ENCODE measurements at regions of chr20 and their contacts with region 1.

Region 1: DNA sequence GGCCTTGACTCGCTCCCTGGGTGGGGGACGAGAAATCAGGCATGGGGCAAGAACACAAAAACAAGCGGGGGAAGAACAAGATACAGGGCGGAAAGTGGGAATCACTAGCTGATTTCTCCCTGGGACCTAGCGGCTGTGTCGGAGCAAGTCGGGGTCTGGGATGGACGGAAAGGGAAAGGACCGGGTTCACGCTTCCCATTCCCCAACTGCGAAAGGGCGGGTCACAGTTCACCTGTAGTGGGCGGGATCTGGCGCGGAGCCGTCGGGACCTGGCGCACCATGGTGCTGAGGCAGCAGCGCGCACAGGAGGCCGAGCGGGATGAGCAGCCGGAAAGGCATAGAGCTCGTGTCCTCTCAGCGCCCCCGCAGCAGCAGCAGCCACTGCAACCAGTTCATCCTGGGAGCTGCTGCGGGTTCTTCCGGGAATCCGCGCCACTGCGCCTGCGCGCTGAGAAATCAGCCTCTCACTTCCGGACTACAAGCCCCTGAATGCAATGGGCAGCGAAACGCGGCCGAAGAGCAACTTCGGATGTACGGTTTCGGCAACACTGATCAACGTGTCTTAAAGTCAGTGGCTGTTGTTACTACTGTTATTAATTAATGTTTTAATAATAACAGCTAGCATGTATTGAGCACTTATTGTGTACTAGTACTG is at the start of gene EDEM2:
- DNase-seq: peak; percentile 95
- H3K4me3 ChIP-seq: peak within 1 kb of the TSS; percentile 64 to 90 (median 87)
- H3K27ac ChIP-seq: peak within 1 kb of the TSS; percentile 81
- H3K4me1 ChIP-seq: peaks cover 11% of the 10 kb centered on the region
- H3K27me3 ChIP-seq: no peaks in the 10 kb centered on the region
- CTCF ChIP-seq: no peak
- total RNA-seq, gene EDEM2: 22.3 to 33.2 TPM

Region 2: DNA sequence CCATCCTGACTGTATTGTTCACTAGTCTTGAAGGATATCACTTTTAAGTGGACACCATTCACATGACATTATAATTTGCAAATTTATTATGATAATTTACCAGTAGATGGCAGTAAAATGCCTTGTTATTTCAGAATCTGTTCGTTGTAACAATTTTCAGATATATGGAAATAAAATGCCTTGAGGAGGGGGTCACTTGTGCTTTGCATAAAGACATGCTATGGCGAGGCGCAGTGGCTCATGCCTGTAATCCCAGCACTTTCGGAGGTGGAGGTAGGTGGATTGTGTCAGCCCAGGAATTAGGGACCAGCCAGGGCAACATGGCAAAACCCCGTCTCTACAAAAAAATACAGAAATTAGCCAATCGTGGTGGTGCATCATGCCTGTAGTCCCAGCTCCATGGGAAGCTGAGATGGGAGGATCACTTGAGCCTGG is 312.6 kb before region 1 on chr20:
- CTCF ChIA-PET with region 1: no interaction called
- dilution Hi-C with region 1: no loop called
- in situ Hi-C with region 1: no loop called
- intact Hi-C with region 1: loop called (anchors 2 kb)
- DNase-seq: peak; percentile 16
- H3K4me3 ChIP-seq: peak overlapping the region in 1 of 3 experiments; percentile 28
- H3K27ac ChIP-seq: no peak overlapping the region
- H3K4me1 ChIP-seq: no peaks in the 10 kb centered on the region
- H3K27me3 ChIP-seq: peaks cover 4% of the 10 kb centered on the region
- CTCF ChIP-seq: peak; percentile 20 to 39

Region 3: DNA sequence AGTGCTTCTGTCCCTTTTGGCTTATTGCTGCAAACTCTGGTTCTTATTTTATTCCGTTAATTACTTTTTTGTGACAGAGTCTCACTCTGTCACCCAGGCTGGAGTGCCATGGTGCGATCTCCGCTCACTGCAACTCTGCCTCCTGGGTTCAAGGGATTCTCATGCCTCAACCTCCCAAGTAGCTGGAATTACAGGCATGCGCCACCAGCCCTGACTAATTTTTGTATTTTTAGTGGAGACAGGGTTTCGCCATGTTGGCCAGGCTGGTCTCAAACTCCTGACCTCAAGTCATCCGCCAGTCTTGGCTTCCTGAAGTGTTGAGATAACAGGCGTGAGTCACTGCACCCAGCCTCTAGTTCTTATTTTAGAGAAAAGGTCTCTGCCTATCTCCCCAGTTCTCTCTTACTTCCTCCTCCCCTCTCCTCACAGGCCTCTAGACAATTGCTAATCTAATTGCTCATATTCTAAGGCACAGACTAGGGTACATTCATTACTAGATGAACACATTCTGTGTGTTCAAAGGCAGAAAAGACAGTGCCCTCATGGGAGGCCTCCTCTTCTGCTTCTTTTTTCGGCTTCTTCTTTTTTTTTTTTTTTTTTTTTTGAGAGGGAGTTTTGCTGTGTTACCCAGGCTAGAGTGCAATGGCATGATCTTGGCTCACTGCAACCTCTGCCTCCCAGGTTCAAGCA is 26.9 kb before region 1 on chr20:
- CTCF ChIA-PET with region 1: no interaction called
- dilution Hi-C with region 1: no loop called
- in situ Hi-C with region 1: no loop called
- intact Hi-C with region 1: no loop called
- DNase-seq: no peak
- H3K4me3 ChIP-seq: no peak overlapping the region
- H3K27ac ChIP-seq: no peak overlapping the region
- H3K4me1 ChIP-seq: no peaks in the 10 kb centered on the region
- H3K27me3 ChIP-seq: no peaks in the 10 kb centered on the region
- CTCF ChIP-seq: no peak

Region 4: GRCh38 chr20:35171753-35172433 is 24.8 kb after region 1 on chr20 and contains the start of gene PROCR:
- CTCF ChIA-PET with region 1: interaction called, 4 read pairs
- dilution Hi-C with region 1: no loop called
- in situ Hi-C with region 1: no loop called
- intact Hi-C with region 1: loop called (anchors 1 kb)
- DNase-seq: peak; percentile 99
- H3K4me3 ChIP-seq: peak within 1 kb of the TSS; percentile 65 to 72 (median 65)
- H3K27ac ChIP-seq: peak within 1 kb of the TSS; percentile 50
- H3K4me1 ChIP-seq: peaks cover 17% of the 10 kb centered on the region
- H3K27me3 ChIP-seq: no peaks in the 10 kb centered on the region
- CTCF ChIP-seq: no peak
- total RNA-seq, gene PROCR: 19.2 to 44.8 TPM

Region 5: GRCh38 chr20:35207950-35208611 is 61.0 kb after region 1 on chr20:
- CTCF ChIA-PET with region 1: interaction called, 7 read pairs
- dilution Hi-C with region 1: no loop called
- in situ Hi-C with region 1: loop called in 1 of 2 experiments (anchors 5 kb)
- intact Hi-C with region 1: loop called (anchors 1 kb)
- DNase-seq: peak; percentile 63
- H3K4me3 ChIP-seq: peak overlapping the region in 1 of 3 experiments; percentile 9
- H3K27ac ChIP-seq: no peak overlapping the region
- H3K4me1 ChIP-seq: peaks cover 6% of the 10 kb centered on the region
- H3K27me3 ChIP-seq: no peaks in the 10 kb centered on the region
- CTCF ChIP-seq: peak; percentile 78 to 86

Region 6: DNA sequence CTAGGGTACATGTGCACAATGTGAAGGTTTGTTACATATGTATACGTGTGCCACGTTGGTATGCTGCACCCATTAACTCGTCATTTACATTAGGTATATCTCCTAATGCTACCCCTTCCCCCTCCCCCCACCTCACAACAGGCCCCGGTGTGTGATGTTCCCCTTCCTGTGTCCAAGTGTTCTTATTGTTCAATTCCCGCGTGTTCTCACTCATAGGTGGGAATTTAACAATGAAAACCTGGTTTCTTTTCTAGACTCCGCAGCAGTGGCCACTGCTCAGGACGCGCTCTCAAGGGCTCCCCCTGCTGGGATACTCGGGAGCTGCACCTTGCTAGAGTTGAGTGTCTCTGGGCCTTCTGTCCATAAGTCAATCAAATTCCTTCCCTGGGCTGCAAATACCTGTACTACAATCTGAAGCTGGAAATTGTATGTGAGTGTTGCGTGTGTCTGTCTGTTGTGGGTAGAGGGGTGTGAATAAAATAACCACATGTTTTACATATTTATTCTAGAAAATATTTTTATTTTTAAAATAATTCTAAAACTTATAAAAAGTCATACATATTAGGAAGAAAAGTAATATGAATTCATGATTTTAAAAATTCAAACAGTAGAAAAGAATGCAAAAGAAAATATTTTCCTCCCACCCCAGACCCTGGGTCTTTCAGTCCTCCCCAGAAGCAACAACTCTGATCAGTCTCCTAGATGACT is 300.2 kb after region 1 on chr20:
- CTCF ChIA-PET with region 1: no interaction called
- dilution Hi-C with region 1: no loop called
- in situ Hi-C with region 1: no loop called
- intact Hi-C with region 1: loop called (anchors 2 kb)
- DNase-seq: peak; percentile 71
- H3K4me3 ChIP-seq: no peak overlapping the region
- H3K27ac ChIP-seq: no peak overlapping the region
- H3K4me1 ChIP-seq: peaks cover 26% of the 10 kb centered on the region
- H3K27me3 ChIP-seq: no peaks in the 10 kb centered on the region
- CTCF ChIP-seq: peak; percentile 89 to 97